RWPE1 (cell line): ENCODE measurements at regions of chr19 and their contacts with region 1.

Region 1: DNA sequence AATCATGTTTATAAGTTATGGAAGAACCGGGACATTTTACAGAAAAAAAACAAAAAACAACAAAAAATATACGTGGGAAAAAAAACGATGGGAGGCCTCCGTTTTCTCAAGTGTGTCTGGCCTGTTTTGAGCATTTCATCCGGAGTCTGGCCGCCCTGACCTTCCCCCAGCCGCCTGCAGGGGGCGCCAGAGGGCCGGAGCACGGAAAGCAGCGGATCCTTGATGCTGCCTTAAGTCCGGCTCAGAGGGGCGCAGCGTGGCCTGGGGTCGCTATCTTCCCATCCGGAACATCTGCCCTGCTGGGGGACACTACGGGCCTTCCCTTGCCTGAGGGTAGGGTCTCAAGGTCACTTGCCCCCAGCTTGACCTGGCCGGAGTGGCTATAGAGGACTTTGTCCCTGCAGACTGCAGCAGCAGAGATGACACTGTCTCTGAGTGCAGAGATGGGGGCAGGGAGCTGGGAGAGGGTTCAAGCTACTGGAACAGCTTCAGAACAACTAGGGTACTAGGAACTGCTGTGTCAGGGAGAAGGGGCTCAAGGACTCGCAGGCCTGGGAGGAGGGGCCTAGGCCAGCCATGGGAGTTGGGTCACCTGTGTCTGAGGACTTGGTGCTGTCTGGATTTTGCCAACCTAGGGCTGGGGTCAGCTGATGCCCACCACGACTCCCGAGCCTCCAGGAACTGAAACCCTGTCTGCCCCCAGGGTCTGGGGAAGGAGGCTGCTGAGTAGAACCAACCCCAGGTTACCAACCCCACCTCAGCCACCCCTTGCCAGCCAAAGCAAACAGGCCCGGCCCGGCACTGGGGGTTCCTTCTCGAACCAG is 1.8 kb upstream of the APOE start:
- DNase-seq: peak; percentile 45
- H3K27ac ChIP-seq: peak overlapping the region; percentile 42
- CTCF ChIP-seq: peak; percentile 97

Region 2: DNA sequence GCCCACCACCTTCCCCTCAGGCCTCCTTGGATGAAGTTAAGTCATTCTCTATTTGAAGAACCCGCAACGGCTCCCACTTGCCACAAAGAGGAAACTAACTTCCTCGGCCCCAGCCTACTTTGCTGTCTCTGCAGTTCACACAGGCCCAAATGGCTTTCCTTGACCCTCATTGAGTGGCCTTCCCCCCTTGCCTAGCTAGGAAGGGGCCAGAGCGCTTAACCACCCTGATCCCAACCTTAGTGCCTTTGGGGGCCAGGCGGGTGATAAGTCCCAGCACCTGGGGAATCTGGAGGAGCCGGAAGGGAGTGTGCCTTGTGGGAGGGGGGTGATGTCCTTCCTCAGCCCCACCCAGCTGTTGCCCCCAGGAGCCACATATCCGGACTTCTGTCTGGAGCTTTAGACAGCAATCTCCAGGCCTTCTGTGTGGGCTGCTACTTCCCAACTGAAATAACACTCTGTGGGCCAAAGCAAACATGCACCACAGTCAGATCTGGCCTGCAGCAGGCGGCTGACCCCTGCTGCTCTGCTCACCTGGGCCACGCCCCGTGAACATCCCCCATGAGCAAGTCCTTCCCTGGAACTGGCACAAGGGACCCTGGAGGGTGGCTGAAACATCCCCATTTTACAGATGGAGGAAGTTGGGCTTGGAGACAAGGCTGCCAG is 47.3 kb before region 1 on chr19:
- CTCF ChIA-PET with region 1: no interaction called
- POLR2A ChIA-PET with region 1: no interaction called
- DNase-seq: no peak
- H3K27ac ChIP-seq: peak overlapping the region; percentile 49
- CTCF ChIP-seq: no peak

Region 3: DNA sequence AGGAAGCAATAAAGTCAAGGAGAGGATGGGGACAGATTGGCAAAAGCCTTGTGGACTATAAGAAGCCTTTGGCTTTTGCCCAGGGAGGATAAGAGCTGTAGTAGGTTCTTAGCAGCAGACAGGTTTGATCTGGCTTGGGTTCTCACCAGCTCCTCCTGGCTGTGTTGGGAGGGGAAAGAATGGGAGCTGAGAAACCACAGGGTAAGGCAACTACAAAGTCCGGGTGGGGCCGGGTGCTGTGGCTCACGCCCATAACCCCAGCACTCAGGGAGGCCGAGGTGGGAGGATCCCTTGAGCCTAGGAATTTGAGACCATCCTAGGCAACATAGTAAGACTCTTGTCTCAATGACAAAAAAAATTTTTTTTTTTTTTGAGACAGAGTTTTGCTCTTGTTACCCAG is 37.1 kb before region 1 on chr19:
- CTCF ChIA-PET with region 1: no interaction called
- POLR2A ChIA-PET with region 1: no interaction called
- DNase-seq: no peak
- H3K27ac ChIP-seq: no peak overlapping the region
- CTCF ChIP-seq: no peak

Region 4: GRCh38 chr19:44924243-44924725 is 20.5 kb after region 1 on chr19:
- CTCF ChIA-PET with region 1: interaction called, 10 read pairs
- POLR2A ChIA-PET with region 1: no interaction called
- DNase-seq: no peak
- H3K27ac ChIP-seq: no peak overlapping the region
- CTCF ChIP-seq: no peak